Sigmoid colon (tissue), 7 donors: ENCODE measurements at regions of chr6 and their contacts with region 1.

Region 1: GRCh38 chr6:34867484-34867883 is 20.4 kb downstream of the TAF11 start:
- DNase-seq: no peak
- H3K4me3 ChIP-seq: no peak overlapping the region
- H3K27ac ChIP-seq: no peak overlapping the region
- H3K4me1 ChIP-seq: peaks cover 0 to 20% (median 11%) of the 10 kb centered on the region in 4 donors
- H3K27me3 ChIP-seq: no peaks in the 10 kb centered on the region
- CTCF ChIP-seq: no peak
- EP300 ChIP-seq: no peak
- POLR2A ChIP-seq: no peak

Region 2: DNA sequence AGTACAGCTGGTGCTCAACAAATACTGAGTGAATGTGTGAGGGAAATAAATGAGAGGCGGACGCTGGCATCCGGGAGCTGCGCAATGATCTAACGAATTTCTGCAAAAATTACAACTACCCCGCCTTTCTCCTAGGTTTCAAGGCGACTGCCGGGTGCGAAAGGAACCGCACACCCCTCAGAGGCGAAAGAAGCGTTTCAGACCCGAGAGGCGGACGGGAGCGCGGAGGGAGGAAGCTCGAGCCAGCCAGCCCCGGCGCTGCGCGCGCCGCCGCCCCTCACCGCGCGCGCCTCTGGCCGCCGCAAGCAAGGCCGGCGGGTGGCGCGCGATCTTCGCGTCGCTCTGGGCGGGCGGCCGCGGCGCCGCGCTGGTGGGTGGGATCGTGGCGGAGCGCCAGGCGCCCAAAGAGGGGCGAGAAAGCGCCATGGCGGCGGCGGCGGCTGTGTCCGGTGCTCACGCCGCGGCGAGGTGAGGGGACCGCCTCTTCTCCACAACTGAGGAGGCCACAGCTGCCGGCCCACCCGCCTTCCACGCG is 75.7 kb before region 1 on chr6 and contains the start of gene BLTP3A:
- intact Hi-C with region 1: loop called (anchors 2 kb)
- DNase-seq: peak; percentile 76
- H3K4me3 ChIP-seq: peak within 1 kb of the TSS; percentile 68 to 98 (median 79)
- H3K27ac ChIP-seq: peak within 1 kb of the TSS; percentile 91 to 95 (median 92)
- H3K4me1 ChIP-seq: peaks cover 0 to 20% (median 13%) of the 10 kb centered on the region in 4 donors
- H3K27me3 ChIP-seq: no peaks in the 10 kb centered on the region
- CTCF ChIP-seq: no peak
- EP300 ChIP-seq: no peak
- POLR2A ChIP-seq: no peak
- total RNA-seq, gene BLTP3A: 6.7 to 11.6 (median 7.2) TPM

Region 3: DNA sequence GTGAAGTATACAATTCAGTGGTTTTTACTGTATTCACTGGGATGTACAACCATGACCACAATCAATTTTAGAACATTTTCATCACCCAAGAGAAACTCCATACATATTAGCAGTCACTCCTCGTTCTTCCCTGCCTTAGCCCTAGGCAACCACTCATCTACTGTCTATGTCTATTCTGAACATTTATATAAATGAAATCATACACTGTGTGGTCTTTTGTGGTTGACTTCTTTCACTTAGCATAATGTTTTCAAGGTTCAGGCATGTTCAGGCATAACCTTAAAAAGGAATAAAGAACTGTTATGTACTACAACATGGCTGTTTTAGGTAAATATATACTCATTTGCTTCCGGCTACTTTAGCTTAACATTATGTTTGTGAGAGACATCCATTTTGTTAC is 38.3 kb before region 1 on chr6:
- intact Hi-C with region 1: no loop called
- DNase-seq: no peak
- H3K4me3 ChIP-seq: no peak overlapping the region
- H3K27ac ChIP-seq: no peak overlapping the region
- H3K4me1 ChIP-seq: no peaks in the 10 kb centered on the region
- H3K27me3 ChIP-seq: no peaks in the 10 kb centered on the region
- CTCF ChIP-seq: no peak
- EP300 ChIP-seq: no peak
- POLR2A ChIP-seq: no peak

Region 4: DNA sequence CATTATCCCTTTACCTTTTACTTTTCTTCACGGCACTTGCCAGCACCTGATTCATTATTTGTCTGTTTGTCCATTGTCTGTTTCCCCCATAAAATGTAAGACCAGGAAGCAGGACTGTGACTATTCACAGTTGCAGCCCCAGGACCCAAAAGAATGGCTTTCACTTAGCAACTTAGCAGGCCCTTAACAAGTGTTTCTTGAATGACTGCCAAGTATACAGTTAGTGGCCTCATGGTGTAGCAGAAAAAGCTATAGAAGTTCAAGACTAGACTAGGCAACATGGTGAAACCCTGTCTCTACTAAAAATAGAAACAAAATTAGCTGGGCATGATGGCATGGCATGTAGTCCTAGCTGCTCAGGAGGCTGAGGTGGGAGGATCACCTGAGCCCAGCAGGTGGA is 1152.7 kb after region 1 on chr6:
- intact Hi-C with region 1: no loop called
- DNase-seq: no peak
- H3K4me3 ChIP-seq: no peak overlapping the region
- H3K27ac ChIP-seq: no peak overlapping the region
- H3K4me1 ChIP-seq: peaks cover 0 to 6% (median 2%) of the 10 kb centered on the region in 4 donors
- H3K27me3 ChIP-seq: peaks cover 3 to 28% (median 5%) of the 10 kb centered on the region in 3 donors
- CTCF ChIP-seq: no peak
- EP300 ChIP-seq: no peak
- POLR2A ChIP-seq: no peak